Right ventricle myocardium superior (tissue), 1 donor: ENCODE measurements at regions of chr15 and their contacts with region 1.

Region 1: DNA sequence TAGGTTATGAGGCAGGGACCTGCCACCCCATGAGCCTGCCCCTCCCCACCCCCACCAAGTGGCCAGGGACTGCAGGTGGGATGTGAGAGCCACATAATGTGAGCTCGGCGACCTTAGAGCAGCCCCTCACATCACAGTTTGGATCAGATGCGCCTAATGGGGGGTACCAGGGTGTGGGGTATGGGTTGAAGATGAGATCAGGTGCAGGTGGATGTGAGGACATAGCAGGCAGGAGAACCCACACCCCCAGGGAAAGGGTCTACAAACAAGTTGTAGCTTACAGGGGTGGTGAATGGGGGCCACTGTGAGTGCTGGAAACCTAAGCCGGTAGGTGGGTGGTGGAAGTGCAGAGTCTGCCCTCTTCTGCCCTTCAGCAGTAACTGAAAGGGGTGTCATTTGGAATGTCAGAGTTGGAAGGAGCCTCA is 94.0 kb downstream of the CORO2B start:
- DNase-seq: no peak
- ATAC-seq: no peak

Region 2: DNA sequence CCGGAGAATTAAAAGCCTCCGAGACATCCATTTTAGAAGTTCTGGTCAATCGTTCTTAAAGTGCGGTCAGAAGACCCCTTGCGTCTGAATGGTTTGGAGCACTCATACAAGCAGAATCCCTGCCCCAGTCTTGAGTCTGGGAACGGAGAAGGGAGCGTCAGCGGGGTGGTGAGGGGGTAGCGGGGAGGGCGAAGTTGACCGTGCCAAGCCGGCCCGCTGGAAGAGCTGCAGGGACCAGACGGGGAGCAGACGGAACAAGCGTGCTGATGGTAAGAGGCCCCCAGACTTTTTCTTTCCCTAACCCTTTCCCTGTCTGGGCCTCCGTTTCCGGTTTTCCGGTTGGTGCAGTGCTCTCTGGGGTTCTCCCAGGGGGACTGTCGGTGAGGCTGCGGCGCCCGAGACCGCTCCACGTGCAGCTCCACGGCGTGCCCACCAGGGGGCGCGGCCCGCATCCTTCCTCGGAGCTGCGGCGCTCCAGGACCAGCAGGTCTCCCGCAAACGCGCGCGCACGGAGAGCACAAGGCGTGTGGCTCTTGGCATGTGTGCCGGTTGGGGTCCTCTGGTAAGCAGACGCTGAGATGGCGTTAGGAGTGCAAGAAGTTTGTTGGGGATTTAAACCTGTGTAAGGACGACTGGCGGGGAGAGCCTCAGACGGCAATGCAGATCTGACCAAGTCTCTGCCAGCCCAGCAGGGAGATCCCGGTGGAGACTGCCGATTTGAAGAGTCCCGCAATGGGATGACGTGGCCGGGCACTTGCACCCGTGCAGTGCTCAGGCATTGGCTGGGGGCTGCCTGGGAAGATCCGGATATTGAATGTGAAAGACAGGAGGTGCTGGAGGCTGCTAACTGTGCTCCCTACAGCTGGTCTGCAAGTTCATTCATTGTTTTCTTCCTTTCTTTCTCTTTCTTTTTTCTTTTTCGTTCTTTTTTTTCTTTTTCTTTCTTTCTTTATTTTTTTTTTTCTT is 113.2 kb before region 1 on chr15:
- intact Hi-C with region 1: loop called (anchors 5 kb)
- DNase-seq: peak; percentile 91
- ATAC-seq: peak; percentile 99

Region 3: DNA sequence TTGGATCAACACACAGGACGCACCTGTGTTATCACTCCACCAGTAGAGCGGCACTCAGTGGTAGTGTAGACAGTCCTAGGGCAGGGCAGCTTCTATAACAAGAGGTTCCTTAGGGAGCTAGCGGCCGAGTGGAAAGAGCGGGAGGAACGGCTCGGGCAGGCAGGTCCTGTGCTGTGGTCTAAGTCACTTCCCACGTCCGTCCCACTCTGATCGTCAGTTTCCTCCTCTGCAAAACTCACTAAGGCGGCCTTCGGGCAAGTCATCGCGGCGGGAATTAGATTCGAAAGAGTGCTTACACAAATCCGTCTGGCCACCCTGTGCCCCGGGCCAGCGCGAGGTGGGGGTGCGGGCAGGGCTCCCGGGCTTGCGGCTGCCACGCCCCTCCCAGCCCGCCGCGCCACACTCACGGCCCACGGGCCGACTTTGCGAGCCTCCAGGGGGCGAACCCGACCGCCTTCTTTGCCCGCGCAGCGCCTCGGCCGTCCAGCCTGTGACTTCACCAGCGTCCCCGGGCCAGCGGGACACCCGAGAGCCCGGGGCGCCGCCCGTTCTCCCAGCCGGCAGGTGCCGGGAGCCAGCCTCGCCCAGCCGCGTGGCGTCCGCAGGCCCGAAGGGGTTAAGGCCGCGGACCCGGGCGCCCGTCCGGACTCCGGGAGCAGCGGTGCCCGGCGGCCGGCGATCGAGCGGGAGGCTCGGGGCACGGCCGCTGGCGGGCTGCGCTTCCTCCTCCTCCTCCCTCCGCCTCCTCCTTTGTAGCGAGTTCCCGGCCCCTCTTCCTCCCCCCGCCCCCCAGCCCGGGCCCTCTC is 94.4 kb before region 1 on chr15:
- intact Hi-C with region 1: loop called (anchors 5 kb)
- DNase-seq: peak; percentile 88
- ATAC-seq: peak; percentile 85

Region 4: DNA sequence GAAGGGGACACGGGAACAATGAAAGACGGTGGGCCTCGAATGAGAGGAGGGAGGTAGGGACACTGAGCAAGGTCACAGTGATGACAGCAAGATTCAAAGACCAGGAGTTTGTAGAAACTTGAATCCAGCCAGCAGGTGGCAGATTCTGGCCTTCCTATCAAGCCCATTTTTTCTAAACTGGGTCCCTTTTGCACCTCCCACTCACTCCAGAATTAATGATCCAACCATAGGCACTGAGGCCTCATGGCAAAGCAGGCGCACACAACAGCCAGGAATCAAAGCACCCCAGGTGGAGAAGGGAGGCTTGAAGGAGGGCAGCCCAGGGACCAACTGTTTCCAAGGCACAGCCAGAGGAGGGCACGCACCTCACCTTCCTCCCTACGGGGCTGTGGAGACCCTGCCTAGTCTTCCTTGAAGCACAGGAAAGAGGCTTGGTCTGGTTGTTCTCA is 57.7 kb after region 1 on chr15:
- intact Hi-C with region 1: no loop called
- DNase-seq: no peak
- ATAC-seq: peak; percentile 50